ENCODE measurements at regions of chr13 and their contacts with region 1.

Region 1: GRCh38 chr13:33090755-33091414 is 74.7 kb downstream of the KL start:
- DNase-seq: peak; percentile 51 to 69
- H3K4me3 ChIP-seq: no peak overlapping the region
- H3K4me3 Mint-ChIP-seq: peak overlapping the region; percentile 50
- H3K27ac Mint-ChIP-seq: peak overlapping the region; percentile 86
- H3K4me1 ChIP-seq: peaks cover 34% of the 10 kb centered on the region
- H3K4me1 Mint-ChIP-seq: peaks cover 34% of the 10 kb centered on the region
- H3K27me3 ChIP-seq: no peaks in the 10 kb centered on the region
- H3K27me3 Mint-ChIP-seq: no peaks in the 10 kb centered on the region
- CTCF ChIP-seq: peak in 1 of 2 experiments; percentile 26

Region 2: DNA sequence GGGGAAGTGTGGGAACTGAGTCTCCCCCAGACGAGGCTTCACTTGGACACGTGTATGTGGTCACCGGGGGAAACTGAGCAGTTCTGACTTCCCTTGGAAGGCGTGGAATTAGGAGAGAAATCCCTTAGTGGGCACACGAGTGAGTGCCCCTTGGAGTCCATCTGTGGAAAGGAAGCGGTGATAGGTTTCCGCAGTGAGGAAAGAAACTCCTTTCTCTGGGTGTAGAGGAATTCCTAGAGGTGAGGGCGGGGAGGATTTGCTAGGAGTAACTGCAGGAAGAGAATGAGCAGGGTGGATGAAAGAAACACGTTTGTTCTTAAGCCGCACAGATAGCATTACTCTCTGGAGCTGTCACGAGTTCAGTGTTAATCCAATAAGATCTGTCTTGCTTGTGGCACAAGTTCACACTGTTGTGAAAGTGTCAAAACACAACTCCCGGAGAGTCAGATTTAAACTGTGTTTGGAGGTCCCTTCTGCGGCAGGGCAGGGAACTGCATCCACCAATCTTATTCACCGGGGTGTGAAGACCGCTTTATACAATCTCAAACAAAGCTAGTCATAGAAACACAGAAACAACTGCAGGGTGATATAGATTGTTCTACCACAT is 73.5 kb before region 1 on chr13:
- CTCF ChIA-PET with region 1: no interaction called
- POLR2A ChIA-PET with region 1: no interaction called
- intact Hi-C with region 1: loop called (anchors 2 kb)
- DNase-seq: peak; percentile 56 to 66
- H3K4me3 ChIP-seq: peak overlapping the region; percentile 59
- H3K4me3 Mint-ChIP-seq: peak overlapping the region; percentile 73
- H3K27ac Mint-ChIP-seq: no peak overlapping the region
- H3K4me1 ChIP-seq: no peaks in the 10 kb centered on the region; the same call in 1 of the 2 replicates
- H3K4me1 Mint-ChIP-seq: no peaks in the 10 kb centered on the region
- H3K27me3 ChIP-seq: peaks cover 2% of the 10 kb centered on the region; the same call in 1 of the 2 replicates
- H3K27me3 Mint-ChIP-seq: peaks cover 8% of the 10 kb centered on the region
- CTCF ChIP-seq: peak in 1 of 2 experiments; percentile 63

Region 3: DNA sequence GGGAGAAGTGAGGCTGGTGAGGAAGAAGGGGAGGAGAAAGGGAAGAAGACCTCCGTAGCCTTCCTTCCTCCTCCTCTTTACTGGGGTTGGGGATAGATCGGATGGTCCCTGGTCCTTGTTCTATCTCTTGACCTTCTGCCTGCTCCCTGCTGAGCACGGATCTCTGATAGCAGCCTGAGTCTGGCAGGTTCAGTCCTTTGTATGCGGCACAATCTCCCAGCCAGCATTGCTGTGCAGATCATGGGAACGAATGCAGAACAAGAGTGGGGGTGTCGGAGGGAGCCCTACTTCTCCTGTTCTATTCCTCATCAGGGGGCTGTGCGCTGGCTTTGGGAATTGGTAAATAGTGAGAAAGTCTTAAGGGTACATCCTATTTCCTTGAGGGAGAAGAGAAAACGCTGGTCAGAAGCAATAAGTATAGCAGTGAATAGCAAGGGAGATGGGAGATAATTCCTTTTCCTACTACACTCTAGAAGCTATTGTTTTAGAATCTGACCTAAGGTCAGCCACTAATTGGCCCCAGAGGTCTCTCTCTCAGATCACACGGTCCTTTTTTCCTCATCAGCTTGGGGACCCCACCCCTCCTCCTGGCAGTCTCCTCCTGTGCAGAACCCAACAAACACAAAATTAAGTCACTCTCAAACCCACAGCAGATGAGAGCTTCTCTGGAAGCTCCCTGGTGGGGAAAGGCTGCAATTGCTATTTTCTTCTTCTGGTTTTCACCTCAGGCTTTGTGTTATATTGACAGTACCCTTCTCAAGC is 33.7 kb before region 1 on chr13:
- CTCF ChIA-PET with region 1: no interaction called
- POLR2A ChIA-PET with region 1: no interaction called
- intact Hi-C with region 1: loop called (anchors 2 kb)
- DNase-seq: peak in 1 of 2 experiments; percentile 41
- H3K4me3 ChIP-seq: no peak overlapping the region
- H3K4me3 Mint-ChIP-seq: no peak overlapping the region
- H3K27ac Mint-ChIP-seq: no peak overlapping the region
- H3K4me1 ChIP-seq: peaks cover 14% of the 10 kb centered on the region
- H3K4me1 Mint-ChIP-seq: peaks cover 27% of the 10 kb centered on the region
- H3K27me3 ChIP-seq: no peaks in the 10 kb centered on the region
- H3K27me3 Mint-ChIP-seq: no peaks in the 10 kb centered on the region
- CTCF ChIP-seq: peak; percentile 40 to 55

Region 4: DNA sequence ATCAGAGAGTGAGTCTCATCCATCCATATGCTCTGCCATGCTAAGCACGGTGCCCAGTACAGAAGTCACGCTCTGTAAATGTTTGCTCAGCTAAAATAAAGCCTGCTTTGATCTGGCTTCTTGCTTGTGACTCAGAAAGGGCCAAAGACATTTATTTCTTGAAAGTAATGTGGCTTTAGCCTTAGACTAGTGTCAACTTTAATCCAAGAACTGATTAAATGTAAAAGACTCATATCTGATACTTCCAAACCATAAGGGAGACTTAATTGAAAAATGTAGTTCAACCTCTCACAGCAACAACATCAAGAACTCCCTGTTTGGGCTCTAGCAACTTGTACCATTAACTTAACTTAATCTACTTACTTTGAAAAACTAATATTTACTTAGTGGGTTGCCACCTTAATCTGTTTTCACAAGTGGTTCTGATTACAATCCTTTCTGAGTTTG is 25.6 kb after region 1 on chr13:
- CTCF ChIA-PET with region 1: no interaction called
- POLR2A ChIA-PET with region 1: no interaction called
- intact Hi-C with region 1: loop called (anchors 2 kb)
- DNase-seq: peak in 1 of 2 experiments; percentile 33
- H3K4me3 ChIP-seq: no peak overlapping the region
- H3K4me3 Mint-ChIP-seq: no peak overlapping the region
- H3K27ac Mint-ChIP-seq: peak overlapping the region; percentile 21
- H3K4me1 ChIP-seq: peaks cover 54% of the 10 kb centered on the region
- H3K4me1 Mint-ChIP-seq: peaks cover 63% of the 10 kb centered on the region
- H3K27me3 ChIP-seq: no peaks in the 10 kb centered on the region
- H3K27me3 Mint-ChIP-seq: no peaks in the 10 kb centered on the region
- CTCF ChIP-seq: no peak

Region 5: GRCh38 chr13:33125821-33126570 is 35.1 kb after region 1 on chr13:
- CTCF ChIA-PET with region 1: no interaction called
- POLR2A ChIA-PET with region 1: no interaction called
- intact Hi-C with region 1: loop called (anchors 1 kb)
- DNase-seq: peak; percentile 85 to 91
- H3K4me3 ChIP-seq: no peak overlapping the region
- H3K4me3 Mint-ChIP-seq: peak overlapping the region; percentile 54
- H3K27ac Mint-ChIP-seq: peak overlapping the region; percentile 88
- H3K4me1 ChIP-seq: peaks cover 41% of the 10 kb centered on the region
- H3K4me1 Mint-ChIP-seq: peaks cover 37% of the 10 kb centered on the region
- H3K27me3 ChIP-seq: no peaks in the 10 kb centered on the region
- H3K27me3 Mint-ChIP-seq: no peaks in the 10 kb centered on the region
- CTCF ChIP-seq: no peak

Measured in Caco-2 (cell line).